CD8-positive, alpha-beta T cell (primary cell): ENCODE measurements at regions of chr9 and their contacts with region 1.

Region 1: GRCh38 chr9:99819856-99820684 is 1.6 kb upstream of the NR4A3 start:
- DNase-seq: peak; percentile 81 to 99 (median 93)
- ATAC-seq: peak; percentile 52
- H3K4me3 ChIP-seq: peak overlapping the region; percentile 77 to 90
- H3K4me3 Mint-ChIP-seq: peak overlapping the region; percentile 99
- H3K27ac ChIP-seq: peak overlapping the region; percentile 87 to 88
- H3K27ac Mint-ChIP-seq: peak overlapping the region; percentile 99
- H3K4me1 ChIP-seq: peaks cover 44% of the 10 kb centered on the region
- H3K4me1 Mint-ChIP-seq: peaks cover 43% of the 10 kb centered on the region
- H3K27me3 ChIP-seq: peaks cover 21 to 33% of the 10 kb centered on the region in 2 experiments
- H3K27me3 Mint-ChIP-seq: peaks cover 24% of the 10 kb centered on the region
- CTCF ChIP-seq: no peak

Region 2: DNA sequence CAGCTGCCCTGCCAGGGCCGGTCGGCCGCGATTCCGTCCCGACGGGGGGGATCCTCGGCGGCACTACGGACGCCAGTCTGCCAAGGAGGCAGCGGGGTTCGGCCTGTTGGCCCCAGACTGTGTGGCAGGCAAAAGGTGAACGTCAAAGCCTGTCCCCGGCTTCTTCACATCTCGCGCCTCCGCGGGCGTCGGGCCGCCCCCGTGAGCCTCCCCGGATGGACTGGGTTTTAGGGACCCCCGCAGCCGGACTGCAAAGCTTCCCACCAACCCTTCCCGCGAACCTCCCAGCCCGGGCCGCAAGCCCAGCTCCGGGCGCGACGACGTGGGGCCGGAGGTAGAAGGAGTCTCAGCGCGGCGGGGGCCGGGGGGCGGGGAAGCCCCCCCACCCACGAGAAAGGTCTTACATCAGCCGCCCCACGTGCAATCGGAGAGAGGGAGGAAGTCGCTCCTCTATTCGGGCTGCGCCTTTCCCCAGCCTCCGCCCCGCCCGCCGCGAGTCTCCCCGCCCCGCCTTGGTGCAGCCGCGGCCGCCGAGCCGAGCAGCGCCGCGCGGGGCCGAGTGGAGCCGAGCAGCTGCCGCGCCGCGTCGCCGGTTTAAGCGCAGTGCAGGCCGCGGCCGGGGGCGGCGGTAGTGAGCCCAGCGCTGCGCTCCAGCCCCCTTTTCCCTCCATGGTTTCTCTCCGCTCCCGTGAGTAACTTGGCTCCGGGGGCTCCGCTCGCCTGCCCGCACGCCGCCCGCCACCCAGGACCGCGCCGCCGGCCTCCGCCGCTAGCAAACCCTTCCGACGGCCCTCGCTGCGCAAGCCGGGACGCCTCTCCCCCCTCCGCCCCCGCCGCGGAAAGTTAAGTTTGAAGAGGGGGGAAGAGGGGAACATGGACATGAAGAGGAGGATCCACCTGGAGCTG is 1837.1 kb before region 1 on chr9 and contains the start of gene ANP32B:
- CTCF ChIA-PET with region 1: no interaction called
- POLR2A ChIA-PET with region 1: no interaction called
- intact Hi-C with region 1: loop called in 1 of 2 experiments (anchors 10 kb)
- DNase-seq: peak; percentile 87 to 97 (median 94)
- ATAC-seq: peak; percentile 83
- H3K4me3 ChIP-seq: peak within 1 kb of the TSS; percentile 75 to 92
- H3K4me3 Mint-ChIP-seq: peak within 1 kb of the TSS; percentile 92
- H3K27ac ChIP-seq: peak within 1 kb of the TSS; percentile 75 to 85
- H3K27ac Mint-ChIP-seq: peak within 1 kb of the TSS; percentile 93
- H3K4me1 ChIP-seq: peaks cover 53% of the 10 kb centered on the region
- H3K4me1 Mint-ChIP-seq: peaks cover 64% of the 10 kb centered on the region
- H3K27me3 ChIP-seq: no peaks in the 10 kb centered on the region
- H3K27me3 Mint-ChIP-seq: no peaks in the 10 kb centered on the region
- CTCF ChIP-seq: peak; percentile 94
- total RNA-seq, gene ANP32B: 168 to 177 TPM

Region 3: DNA sequence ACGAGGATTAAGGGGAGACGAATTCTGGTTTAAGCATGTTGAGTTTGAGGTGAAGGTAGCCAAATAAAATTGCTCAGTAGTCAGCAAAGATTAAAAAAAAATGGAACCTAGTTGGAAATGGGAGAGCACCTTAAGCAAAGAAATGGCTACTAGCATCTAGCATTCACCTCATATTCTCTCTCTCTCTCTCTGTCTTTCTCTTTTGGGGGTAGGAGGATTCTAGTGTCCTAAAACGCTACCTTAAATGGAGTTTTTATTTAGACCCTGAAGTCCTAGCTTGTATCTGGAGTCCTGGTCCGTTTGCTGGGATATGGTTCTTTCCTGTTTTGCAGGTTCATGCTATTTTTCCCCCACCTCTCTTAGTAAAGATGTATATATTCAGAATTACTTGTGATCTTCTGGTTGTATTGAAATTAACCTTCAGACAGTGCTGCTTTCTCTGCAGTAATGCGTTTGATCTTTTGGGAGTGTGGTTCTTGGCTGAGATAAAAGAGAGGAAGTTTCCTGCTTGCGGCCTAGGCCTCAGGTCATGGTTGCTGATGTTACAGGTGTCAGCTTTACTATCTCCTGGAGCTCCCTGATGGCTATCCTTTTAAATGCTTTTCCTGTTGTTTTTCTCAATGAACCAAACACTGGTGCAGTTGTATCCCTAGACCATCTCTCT is 707.2 kb before region 1 on chr9:
- CTCF ChIA-PET with region 1: no interaction called
- POLR2A ChIA-PET with region 1: no interaction called
- intact Hi-C with region 1: loop called (anchors 5 kb)
- DNase-seq: peak in 5 of 9 experiments; percentile 45 to 87 (median 69)
- ATAC-seq: peak; percentile 92
- H3K4me3 ChIP-seq: peak overlapping the region in 1 of 2 experiments; percentile 10
- H3K4me3 Mint-ChIP-seq: peak overlapping the region; percentile 66
- H3K27ac ChIP-seq: peak overlapping the region; percentile 6 to 41
- H3K27ac Mint-ChIP-seq: peak overlapping the region; percentile 88
- H3K4me1 ChIP-seq: peaks cover 85% of the 10 kb centered on the region
- H3K4me1 Mint-ChIP-seq: peaks cover 93% of the 10 kb centered on the region
- H3K27me3 ChIP-seq: no peaks in the 10 kb centered on the region
- H3K27me3 Mint-ChIP-seq: no peaks in the 10 kb centered on the region
- CTCF ChIP-seq: no peak

Region 4: DNA sequence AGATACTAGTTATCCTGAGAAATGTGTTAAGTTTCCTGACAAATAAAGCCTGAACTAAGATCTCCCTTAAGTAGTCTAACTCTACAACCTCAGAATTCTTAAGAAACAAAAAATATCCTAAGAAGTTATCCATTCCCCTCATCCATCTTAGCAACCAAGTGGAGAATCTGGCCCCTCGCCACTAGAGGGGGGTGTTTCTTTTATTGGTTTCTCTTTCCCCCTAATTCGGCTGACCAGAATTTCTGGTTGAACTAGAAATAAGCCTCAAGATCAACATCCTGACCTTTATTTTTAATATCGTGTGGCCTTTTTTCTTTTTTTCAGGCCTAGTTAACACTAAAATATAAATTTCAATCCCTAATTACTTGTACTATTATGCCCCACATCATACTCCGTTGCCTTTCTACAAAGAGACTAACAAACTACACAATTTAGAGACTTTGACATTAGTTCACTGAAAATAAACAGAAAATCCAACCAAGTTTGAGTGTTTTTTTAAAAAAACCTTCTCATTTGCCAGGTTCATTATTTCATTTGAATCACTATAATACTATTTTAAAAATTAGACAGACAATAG is 12.7 kb before region 1 on chr9:
- CTCF ChIA-PET with region 1: interaction called, 4 read pairs
- POLR2A ChIA-PET with region 1: interaction called, 5 read pairs
- intact Hi-C with region 1: loop called (anchors 1 to 2 kb)
- DNase-seq: peak in 8 of 9 experiments; percentile 51 to 85 (median 74)
- ATAC-seq: peak; percentile 84
- H3K4me3 ChIP-seq: no peak overlapping the region
- H3K4me3 Mint-ChIP-seq: no peak overlapping the region
- H3K27ac ChIP-seq: no peak overlapping the region
- H3K27ac Mint-ChIP-seq: no peak overlapping the region
- H3K4me1 ChIP-seq: no peaks in the 10 kb centered on the region
- H3K4me1 Mint-ChIP-seq: peaks cover 13% of the 10 kb centered on the region
- H3K27me3 ChIP-seq: no peaks in the 10 kb centered on the region
- H3K27me3 Mint-ChIP-seq: peaks cover 4% of the 10 kb centered on the region
- CTCF ChIP-seq: peak; percentile 90

Region 5: GRCh38 chr9:100011062-100011681 is 191.1 kb after region 1 on chr9:
- CTCF ChIA-PET with region 1: interaction called, 5 read pairs
- POLR2A ChIA-PET with region 1: no interaction called
- intact Hi-C with region 1: loop called in 1 of 2 experiments (anchors 5 kb)
- DNase-seq: peak in 7 of 9 experiments; percentile 6 to 77 (median 41)
- ATAC-seq: peak; percentile 54
- H3K4me3 ChIP-seq: no peak overlapping the region
- H3K4me3 Mint-ChIP-seq: no peak overlapping the region
- H3K27ac ChIP-seq: no peak overlapping the region
- H3K27ac Mint-ChIP-seq: no peak overlapping the region
- H3K4me1 ChIP-seq: no peaks in the 10 kb centered on the region
- H3K4me1 Mint-ChIP-seq: no peaks in the 10 kb centered on the region
- H3K27me3 ChIP-seq: no peaks in the 10 kb centered on the region
- H3K27me3 Mint-ChIP-seq: no peaks in the 10 kb centered on the region
- CTCF ChIP-seq: peak; percentile 82

Region 6: GRCh38 chr9:100411472-100412283 is 591.6 kb after region 1 on chr9:
- CTCF ChIA-PET with region 1: no interaction called
- POLR2A ChIA-PET with region 1: no interaction called
- intact Hi-C with region 1: loop called in 1 of 2 experiments (anchors 5 kb)
- DNase-seq: peak; percentile 60 to 94 (median 87)
- ATAC-seq: peak; percentile 100
- H3K4me3 ChIP-seq: peak overlapping the region; percentile 42 to 57
- H3K4me3 Mint-ChIP-seq: peak overlapping the region; percentile 94
- H3K27ac ChIP-seq: peak overlapping the region in 1 of 2 experiments; percentile 25
- H3K27ac Mint-ChIP-seq: peak overlapping the region; percentile 83
- H3K4me1 ChIP-seq: peaks cover 9% of the 10 kb centered on the region
- H3K4me1 Mint-ChIP-seq: peaks cover 13% of the 10 kb centered on the region
- H3K27me3 ChIP-seq: peaks cover 0 to 5% of the 10 kb centered on the region in 2 experiments
- H3K27me3 Mint-ChIP-seq: peaks cover 26% of the 10 kb centered on the region
- CTCF ChIP-seq: no peak

Region 7: GRCh38 chr9:101530077-101530711 is 1710.1 kb after region 1 on chr9:
- CTCF ChIA-PET with region 1: no interaction called
- POLR2A ChIA-PET with region 1: no interaction called
- intact Hi-C with region 1: loop called in 1 of 2 experiments (anchors 5 kb)
- DNase-seq: peak; percentile 36 to 83 (median 65)
- ATAC-seq: peak; percentile 33
- H3K4me3 ChIP-seq: no peak overlapping the region
- H3K4me3 Mint-ChIP-seq: no peak overlapping the region
- H3K27ac ChIP-seq: no peak overlapping the region
- H3K27ac Mint-ChIP-seq: no peak overlapping the region
- H3K4me1 ChIP-seq: peaks cover 14% of the 10 kb centered on the region
- H3K4me1 Mint-ChIP-seq: peaks cover 20% of the 10 kb centered on the region
- H3K27me3 ChIP-seq: no peaks in the 10 kb centered on the region
- H3K27me3 Mint-ChIP-seq: peaks cover 10% of the 10 kb centered on the region
- CTCF ChIP-seq: peak; percentile 86